CD8-positive, alpha-beta T cell (primary cell): ENCODE measurements at regions of chr1 and their contacts with region 1.

Region 1: DNA sequence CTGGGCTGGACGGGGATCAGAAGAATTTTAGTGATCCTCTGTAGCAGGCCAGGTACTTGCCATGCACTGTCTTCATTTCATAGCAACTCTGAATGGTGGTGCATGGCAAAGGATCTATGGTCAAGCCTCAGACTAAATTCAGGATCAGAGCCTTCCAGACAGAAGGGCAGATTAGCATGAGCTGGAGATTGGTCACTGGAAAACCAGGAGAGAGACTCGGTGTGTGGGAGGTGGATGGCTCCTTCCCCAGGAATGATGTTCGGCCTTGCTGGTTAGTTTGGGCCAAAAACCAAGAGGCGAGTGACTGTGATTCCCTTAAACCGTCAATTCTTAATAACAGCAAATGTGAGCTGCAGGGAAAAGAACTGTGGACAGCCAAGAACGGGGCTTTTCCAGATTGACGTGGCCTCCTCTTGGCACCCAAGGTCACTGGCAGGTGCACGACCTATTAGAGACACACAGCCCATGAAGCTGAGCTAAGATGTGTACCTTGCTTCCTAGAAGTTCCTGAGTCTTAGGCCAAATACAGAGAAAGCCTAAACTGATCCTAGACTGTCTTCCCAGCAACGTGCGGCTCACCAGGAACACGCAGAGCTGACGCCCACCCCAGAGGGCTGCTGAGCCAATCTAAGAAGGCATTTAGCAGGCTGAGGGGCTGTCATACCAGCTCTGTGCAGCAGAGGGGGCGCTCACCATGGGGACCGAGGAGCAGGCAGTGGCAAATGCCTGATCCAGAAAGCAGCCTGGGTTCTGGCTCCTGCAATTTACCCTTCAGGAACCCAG is 18.5 kb downstream of the ALDH4A1 start:
- DNase-seq: peak; percentile 51 to 82 (median 76)
- ATAC-seq: peak; percentile 97
- H3K4me3 ChIP-seq: no peak overlapping the region
- H3K4me3 Mint-ChIP-seq: no peak overlapping the region
- H3K27ac ChIP-seq: no peak overlapping the region
- H3K27ac Mint-ChIP-seq: no peak overlapping the region
- H3K4me1 ChIP-seq: no peaks in the 10 kb centered on the region
- H3K4me1 Mint-ChIP-seq: no peaks in the 10 kb centered on the region
- H3K27me3 ChIP-seq: no peaks in the 10 kb centered on the region
- H3K27me3 Mint-ChIP-seq: no peaks in the 10 kb centered on the region
- CTCF ChIP-seq: peak; percentile 86

Region 2: DNA sequence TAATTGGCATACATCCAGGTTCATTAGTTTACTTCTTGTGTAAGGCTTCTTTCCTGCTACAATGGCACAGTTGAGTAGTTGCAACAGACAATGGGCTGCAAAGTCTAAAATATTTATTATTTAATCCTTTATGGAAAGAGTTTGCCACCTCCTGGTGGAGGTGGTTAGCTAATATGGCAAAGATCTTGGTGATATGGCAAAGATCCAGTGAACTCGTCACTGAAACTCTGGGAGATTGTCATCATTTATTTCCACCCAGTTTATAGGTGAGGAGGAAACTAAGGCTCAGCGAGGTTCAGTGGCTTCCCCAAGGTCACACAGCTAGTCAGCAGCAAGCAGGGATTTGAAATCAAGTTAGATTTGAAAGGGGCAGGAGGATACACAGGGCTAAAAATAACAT is 88.7 kb after region 1 on chr1:
- CTCF ChIA-PET with region 1: interaction called, 60 read pairs
- POLR2A ChIA-PET with region 1: interaction called, 4 read pairs
- intact Hi-C with region 1: loop called (anchors 1 kb)
- DNase-seq: peak in 4 of 9 experiments; percentile 27 to 73 (median 52)
- ATAC-seq: peak; percentile 61
- H3K4me3 ChIP-seq: no peak overlapping the region
- H3K4me3 Mint-ChIP-seq: no peak overlapping the region
- H3K27ac ChIP-seq: no peak overlapping the region
- H3K27ac Mint-ChIP-seq: no peak overlapping the region
- H3K4me1 ChIP-seq: peaks cover 3% of the 10 kb centered on the region
- H3K4me1 Mint-ChIP-seq: peaks cover 4% of the 10 kb centered on the region
- H3K27me3 ChIP-seq: no peaks in the 10 kb centered on the region
- H3K27me3 Mint-ChIP-seq: peaks cover 7% of the 10 kb centered on the region
- CTCF ChIP-seq: peak; percentile 59

Region 3: GRCh38 chr1:19096036-19096833 is 212.4 kb after region 1 on chr1:
- CTCF ChIA-PET with region 1: interaction called, 37 read pairs
- POLR2A ChIA-PET with region 1: no interaction called
- intact Hi-C with region 1: no loop called
- DNase-seq: peak in 3 of 9 experiments; percentile 8 to 36 (median 30)
- ATAC-seq: no peak
- H3K4me3 ChIP-seq: no peak overlapping the region
- H3K4me3 Mint-ChIP-seq: no peak overlapping the region
- H3K27ac ChIP-seq: no peak overlapping the region
- H3K27ac Mint-ChIP-seq: no peak overlapping the region
- H3K4me1 ChIP-seq: no peaks in the 10 kb centered on the region
- H3K4me1 Mint-ChIP-seq: no peaks in the 10 kb centered on the region
- H3K27me3 ChIP-seq: no peaks in the 10 kb centered on the region
- H3K27me3 Mint-ChIP-seq: no peaks in the 10 kb centered on the region
- CTCF ChIP-seq: no peak

Region 4: GRCh38 chr1:19113697-19114092 is 229.9 kb after region 1 on chr1:
- CTCF ChIA-PET with region 1: interaction called, 14 read pairs
- POLR2A ChIA-PET with region 1: no interaction called
- intact Hi-C with region 1: no loop called
- DNase-seq: peak in 7 of 9 experiments; percentile 8 to 54 (median 36)
- ATAC-seq: peak; percentile 65
- H3K4me3 ChIP-seq: no peak overlapping the region
- H3K4me3 Mint-ChIP-seq: no peak overlapping the region
- H3K27ac ChIP-seq: no peak overlapping the region
- H3K27ac Mint-ChIP-seq: no peak overlapping the region
- H3K4me1 ChIP-seq: no peaks in the 10 kb centered on the region
- H3K4me1 Mint-ChIP-seq: no peaks in the 10 kb centered on the region
- H3K27me3 ChIP-seq: no peaks in the 10 kb centered on the region
- H3K27me3 Mint-ChIP-seq: no peaks in the 10 kb centered on the region
- CTCF ChIP-seq: peak; percentile 36